ENCODE measurements at regions of chr3 and their contacts with region 1.

Region 1: GRCh38 chr3:75727985-75728384 is 57.4 kb downstream of the ZNF717 start:
- DNase-seq: no peak
- ATAC-seq: no peak
- H3K4me3 Mint-ChIP-seq: no peak overlapping the region
- H3K27ac Mint-ChIP-seq: no peak overlapping the region
- H3K4me1 Mint-ChIP-seq: peaks cover 6% of the 10 kb centered on the region
- H3K27me3 Mint-ChIP-seq: peaks cover 11% of the 10 kb centered on the region
- CTCF ChIP-seq: no peak

Region 2: GRCh38 chr3:75631541-75631940 is 96.4 kb before region 1 on chr3:
- CTCF ChIA-PET with region 1: no interaction called
- POLR2A ChIA-PET with region 1: no interaction called
- DNase-seq: no peak
- ATAC-seq: no peak
- H3K4me3 Mint-ChIP-seq: no peak overlapping the region
- H3K27ac Mint-ChIP-seq: no peak overlapping the region
- H3K4me1 Mint-ChIP-seq: peaks cover 11% of the 10 kb centered on the region
- H3K27me3 Mint-ChIP-seq: no peaks in the 10 kb centered on the region
- CTCF ChIP-seq: no peak

Region 3: DNA sequence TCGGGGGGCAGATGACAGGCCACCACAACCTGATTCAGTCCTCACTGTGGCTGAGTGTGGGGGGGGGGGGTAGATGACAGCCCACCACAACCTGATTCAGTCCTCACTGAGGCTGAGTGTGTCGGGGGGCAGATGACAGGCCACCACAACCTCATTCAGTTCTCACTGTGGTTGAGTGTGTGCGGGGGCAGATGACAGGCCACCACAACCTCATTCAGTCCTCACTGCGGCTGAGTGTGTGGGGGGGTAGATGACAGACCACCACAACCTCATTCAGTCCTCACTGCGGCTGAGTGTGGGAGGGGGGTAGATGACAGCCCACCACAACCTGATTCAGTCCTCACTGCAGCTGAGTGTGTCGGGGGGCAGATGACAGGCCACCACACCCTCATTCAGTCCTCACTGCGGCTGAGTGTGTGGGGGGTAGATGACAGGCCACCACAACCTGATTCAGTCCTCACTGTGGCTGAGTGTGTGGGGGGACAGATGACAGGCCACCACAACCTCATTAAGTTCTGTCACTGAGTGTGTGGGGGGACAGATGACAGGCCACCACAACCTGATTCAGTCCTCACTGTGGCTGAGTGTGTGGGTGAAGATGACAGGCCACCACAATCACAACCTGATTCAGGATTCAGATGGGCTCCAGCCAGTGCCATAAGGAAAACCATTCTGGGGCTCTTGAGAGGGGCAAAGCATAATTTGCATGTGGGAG is 40.5 kb after region 1 on chr3:
- CTCF ChIA-PET with region 1: interaction called, 13 read pairs
- POLR2A ChIA-PET with region 1: no interaction called
- DNase-seq: no peak
- ATAC-seq: no peak
- H3K4me3 Mint-ChIP-seq: no peak overlapping the region
- H3K27ac Mint-ChIP-seq: no peak overlapping the region; the same call in 1 of the 2 replicates
- H3K4me1 Mint-ChIP-seq: no peaks in the 10 kb centered on the region
- H3K27me3 Mint-ChIP-seq: no peaks in the 10 kb centered on the region
- CTCF ChIP-seq: no peak

Region 4: GRCh38 chr3:75814797-75815196 is 86.8 kb after region 1 on chr3:
- CTCF ChIA-PET with region 1: interaction called, 15 read pairs
- POLR2A ChIA-PET with region 1: no interaction called
- DNase-seq: no peak
- ATAC-seq: no peak
- H3K4me3 Mint-ChIP-seq: peak overlapping the region; percentile 28
- H3K27ac Mint-ChIP-seq: peak overlapping the region; percentile 12; the same call in 1 of the 2 replicates
- H3K4me1 Mint-ChIP-seq: peaks cover 73% of the 10 kb centered on the region
- H3K27me3 Mint-ChIP-seq: peaks cover 18% of the 10 kb centered on the region
- CTCF ChIP-seq: no peak

Region 5: DNA sequence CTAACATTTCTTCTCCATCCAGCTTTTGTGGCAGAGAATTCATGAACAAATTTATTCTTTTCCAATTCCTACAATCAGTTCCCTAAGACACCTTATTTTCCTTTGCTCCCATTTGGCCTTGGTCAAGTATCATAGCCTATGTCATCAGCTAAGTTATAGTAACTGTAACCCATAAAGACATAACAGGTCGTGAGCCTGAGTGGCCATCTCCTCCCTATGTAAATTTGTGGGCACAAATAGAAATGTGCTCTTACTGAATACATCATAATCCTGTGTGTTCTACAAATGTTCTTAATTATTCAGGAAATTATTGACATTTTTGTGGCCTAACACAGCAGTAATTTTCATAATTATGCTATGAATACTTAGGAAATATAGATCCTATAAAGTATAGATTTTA is 166.2 kb after region 1 on chr3:
- CTCF ChIA-PET with region 1: no interaction called
- POLR2A ChIA-PET with region 1: no interaction called
- DNase-seq: no peak
- ATAC-seq: no peak
- H3K4me3 Mint-ChIP-seq: no peak overlapping the region
- H3K27ac Mint-ChIP-seq: no peak overlapping the region
- H3K4me1 Mint-ChIP-seq: peaks cover 20% of the 10 kb centered on the region
- H3K27me3 Mint-ChIP-seq: no peaks in the 10 kb centered on the region
- CTCF ChIP-seq: no peak

Region 6: GRCh38 chr3:75906555-75907112 is 178.6 kb after region 1 on chr3:
- CTCF ChIA-PET with region 1: interaction called, 11 read pairs
- POLR2A ChIA-PET with region 1: no interaction called
- DNase-seq: peak; percentile 87
- ATAC-seq: peak; percentile 99
- H3K4me3 Mint-ChIP-seq: peak overlapping the region; percentile 92
- H3K27ac Mint-ChIP-seq: peak overlapping the region; percentile 49; the same call in 1 of the 2 replicates
- H3K4me1 Mint-ChIP-seq: peaks cover 17% of the 10 kb centered on the region
- H3K27me3 Mint-ChIP-seq: peaks cover 18% of the 10 kb centered on the region
- CTCF ChIP-seq: no peak

Measured in WTC11 (cell line).